H1 (cell line): ENCODE measurements at regions of chr12 and their contacts with region 1.

Region 1: GRCh38 chr12:132812631-132813305 is 15.9 kb downstream of the GOLGA3 start:
- DNase-seq: no peak
- H3K4me3 ChIP-seq: no peak overlapping the region
- H3K27ac ChIP-seq: no peak overlapping the region
- H3K4me1 ChIP-seq: no peaks in the 10 kb centered on the region; a peak in 1 of 7 replicates
- H3K27me3 ChIP-seq: no peaks in the 10 kb centered on the region
- CTCF ChIP-seq: no peak
- EP300 ChIP-seq: no peak
- POLR2A ChIP-seq: no peak
- RAD21 ChIP-seq: no peak

Region 2: GRCh38 chr12:132801741-132802140 is 11.0 kb before region 1 on chr12:
- CTCF ChIA-PET with region 1: interaction called, 10 read pairs
- POLR2A ChIA-PET with region 1: interaction called, 4 read pairs
- DNase-seq: no peak
- H3K4me3 ChIP-seq: no peak overlapping the region
- H3K27ac ChIP-seq: no peak overlapping the region
- H3K4me1 ChIP-seq: no peaks in the 10 kb centered on the region
- H3K27me3 ChIP-seq: no peaks in the 10 kb centered on the region
- CTCF ChIP-seq: no peak
- EP300 ChIP-seq: no peak
- POLR2A ChIP-seq: no peak
- RAD21 ChIP-seq: no peak

Region 3: GRCh38 chr12:132828706-132829534 is 16.2 kb after region 1 on chr12 and contains the start of gene GOLGA3:
- CTCF ChIA-PET with region 1: interaction called, 5 read pairs
- POLR2A ChIA-PET with region 1: interaction called, 16 read pairs
- DNase-seq: peak; percentile 85 to 92
- H3K4me3 ChIP-seq: peak within 1 kb of the TSS; percentile 57 to 96 (median 93)
- H3K27ac ChIP-seq: peak within 1 kb of the TSS; percentile 100
- H3K4me1 ChIP-seq: peaks cover 0 to 9% (median under 1%) of the 10 kb centered on the region in 4 experiments; a peak in 1 of 7 replicates
- H3K27me3 ChIP-seq: no peaks in the 10 kb centered on the region
- CTCF ChIP-seq: no peak
- EP300 ChIP-seq: peak in 1 of 2 experiments; percentile 12; a peak in 1 of 3 replicates
- POLR2A ChIP-seq: peak; percentile 51 to 75; a peak in 2 of 3 replicates
- RAD21 ChIP-seq: no peak
- total RNA-seq, gene GOLGA3: 33.1 and 33.4 TPM in 2 replicates

Region 4: GRCh38 chr12:132866251-132866828 is 53.6 kb after region 1 on chr12:
- CTCF ChIA-PET with region 1: no interaction called
- POLR2A ChIA-PET with region 1: no interaction called
- DNase-seq: no peak
- H3K4me3 ChIP-seq: no peak overlapping the region
- H3K27ac ChIP-seq: no peak overlapping the region
- H3K4me1 ChIP-seq: no peaks in the 10 kb centered on the region
- H3K27me3 ChIP-seq: no peaks in the 10 kb centered on the region
- CTCF ChIP-seq: no peak
- EP300 ChIP-seq: no peak
- POLR2A ChIP-seq: no peak
- RAD21 ChIP-seq: no peak